HEK293T (cell line): ENCODE measurements at regions of chr6 and their contacts with region 1.

Region 1: DNA sequence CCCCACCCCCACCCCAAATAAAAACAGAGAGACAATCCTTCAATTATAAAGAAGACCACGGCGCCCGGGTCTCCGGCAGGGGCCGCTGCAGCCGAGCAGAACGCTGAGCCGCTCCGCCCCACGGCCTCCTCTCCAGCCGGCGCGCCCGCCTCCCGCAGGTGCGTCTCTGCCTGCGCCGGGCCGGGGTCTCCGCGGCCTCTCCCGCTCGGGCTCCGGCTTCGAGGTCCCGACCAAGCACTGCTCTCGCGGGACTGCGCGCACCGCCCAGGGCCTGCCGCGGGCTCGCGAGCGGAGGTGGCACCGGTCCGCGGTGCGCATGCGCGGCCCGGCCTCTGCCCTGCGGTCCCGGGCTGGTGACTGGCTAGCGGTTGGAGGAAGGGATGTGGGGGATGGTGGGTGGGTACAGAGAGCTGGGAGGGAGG is 241 bp upstream of the SIRT5 start:
- DNase-seq: peak; percentile 96

Region 2: DNA sequence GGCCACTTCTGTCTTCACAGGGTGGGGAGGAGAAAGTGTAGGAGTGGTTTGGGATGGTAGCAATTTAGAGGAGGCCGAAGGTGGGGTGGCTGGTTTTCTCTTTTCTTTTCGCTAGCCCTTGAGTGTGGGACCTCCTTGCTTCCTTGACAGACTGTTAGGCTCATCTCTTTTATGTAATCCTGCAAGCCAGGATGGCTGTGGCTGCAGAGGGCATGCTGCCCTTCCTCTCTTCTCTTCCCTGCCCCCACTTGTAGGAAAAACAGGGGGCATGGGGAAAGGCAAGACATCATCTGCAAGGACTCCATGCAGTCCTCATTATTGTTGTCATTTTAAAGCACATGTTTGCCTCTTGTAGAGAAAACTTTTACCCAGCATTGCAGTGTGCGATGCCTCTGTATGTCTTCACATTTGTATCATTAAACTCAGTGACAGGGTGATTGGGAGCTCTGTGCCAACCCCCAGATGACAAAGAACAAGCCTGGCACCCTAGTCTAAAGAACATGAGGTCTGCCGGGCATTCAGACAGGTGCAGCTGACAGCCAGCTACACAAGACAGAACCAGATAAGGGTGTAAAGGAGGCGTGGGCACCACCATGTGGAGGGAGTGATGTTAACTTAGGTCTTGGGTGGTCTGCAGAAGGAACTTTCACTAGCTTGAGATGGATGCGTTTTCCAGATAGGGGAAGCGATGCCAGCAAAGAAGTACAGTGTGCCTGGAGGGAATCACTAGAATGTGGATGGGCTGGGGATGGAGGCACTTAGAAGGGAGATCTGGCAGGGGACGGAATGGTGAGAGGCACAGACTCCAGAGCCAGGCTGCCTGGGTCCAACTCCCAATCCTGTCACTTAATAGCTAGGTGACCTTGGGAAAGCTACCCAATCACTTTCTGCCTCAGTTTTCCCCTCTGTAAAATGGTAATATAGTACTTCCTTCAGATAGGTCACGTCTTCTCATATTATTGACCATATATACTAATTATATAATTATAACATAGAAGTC is 453.4 kb before region 1 on chr6:
- CTCF ChIA-PET with region 1: no interaction called
- POLR2A ChIA-PET with region 1: no interaction called
- DNase-seq: no peak

Region 3: GRCh38 chr6:13328076-13328874 is 245.9 kb before region 1 on chr6 and contains the start of gene TBC1D7:
- CTCF ChIA-PET with region 1: no interaction called
- POLR2A ChIA-PET with region 1: interaction called, 17 read pairs
- DNase-seq: peak; percentile 94

Region 4: GRCh38 chr6:13486679-13487121 is 87.5 kb before region 1 on chr6:
- CTCF ChIA-PET with region 1: interaction called, 3 read pairs
- POLR2A ChIA-PET with region 1: interaction called, 17 read pairs
- DNase-seq: peak; percentile 60

Region 5: GRCh38 chr6:13561624-13562267 is 12.4 kb before region 1 on chr6:
- CTCF ChIA-PET with region 1: interaction called, 13 read pairs
- POLR2A ChIA-PET with region 1: interaction called, 28 read pairs
- DNase-seq: no peak

Region 6: DNA sequence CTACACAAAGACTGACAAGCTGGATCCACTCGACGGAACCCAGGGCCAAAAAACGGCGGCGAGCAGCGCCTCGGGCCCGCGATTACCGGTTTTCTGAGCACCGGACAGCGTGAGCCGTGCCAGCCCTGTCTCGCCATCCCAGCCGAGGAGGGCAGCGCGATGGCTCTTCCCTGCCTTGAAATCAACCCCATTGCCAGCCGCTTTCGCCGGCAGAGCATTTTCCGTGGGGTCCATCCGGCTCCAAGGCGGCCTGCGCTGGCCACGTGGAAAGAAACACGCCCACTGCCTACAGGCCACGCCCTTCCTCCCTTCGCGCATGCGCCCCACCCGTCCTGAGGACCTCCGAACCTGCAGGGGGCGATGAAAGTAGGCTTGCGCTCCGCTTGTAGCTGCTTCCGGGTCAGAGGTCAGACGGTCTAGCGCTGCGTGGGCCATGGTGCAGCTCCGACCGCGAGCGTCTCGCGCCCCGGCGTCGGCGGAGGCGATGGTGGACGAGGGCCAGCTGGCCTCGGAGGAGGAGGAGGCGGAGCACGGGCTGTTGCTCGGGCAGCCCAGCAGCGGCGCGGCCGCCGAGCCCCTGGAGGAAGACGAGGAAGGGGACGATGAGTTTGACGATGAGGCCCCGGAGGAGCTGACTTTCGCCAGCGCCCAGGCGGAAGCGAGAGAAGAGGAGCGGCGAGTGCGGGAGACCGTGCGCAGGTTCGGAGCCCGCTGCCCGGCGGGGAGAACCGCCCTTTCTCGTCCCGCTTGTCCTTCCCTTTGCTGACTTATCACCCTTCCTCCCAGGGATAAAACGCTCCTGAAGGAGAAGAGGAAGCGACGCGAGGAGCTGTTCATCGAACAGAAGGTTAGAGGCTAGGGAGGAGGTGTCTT is 41.0 kb after region 1 on chr6 and contains the start of gene NOL7:
- CTCF ChIA-PET with region 1: interaction called, 11 read pairs
- POLR2A ChIA-PET with region 1: interaction called, 29 read pairs
- DNase-seq: peak; percentile 97